ENCODE measurements at regions of chr5 and their contacts with region 1.

Region 1: GRCh38 chr5:177081859-177082258 is 4.9 kb upstream of the FGFR4 start:
- DNase-seq: no peak
- ATAC-seq: no peak
- H3K4me3 Mint-ChIP-seq: no peak overlapping the region
- H3K27ac Mint-ChIP-seq: no peak overlapping the region
- H3K4me1 Mint-ChIP-seq: peaks cover 14% of the 10 kb centered on the region
- H3K27me3 Mint-ChIP-seq: peaks cover 3% of the 10 kb centered on the region
- CTCF ChIP-seq: no peak

Region 2: DNA sequence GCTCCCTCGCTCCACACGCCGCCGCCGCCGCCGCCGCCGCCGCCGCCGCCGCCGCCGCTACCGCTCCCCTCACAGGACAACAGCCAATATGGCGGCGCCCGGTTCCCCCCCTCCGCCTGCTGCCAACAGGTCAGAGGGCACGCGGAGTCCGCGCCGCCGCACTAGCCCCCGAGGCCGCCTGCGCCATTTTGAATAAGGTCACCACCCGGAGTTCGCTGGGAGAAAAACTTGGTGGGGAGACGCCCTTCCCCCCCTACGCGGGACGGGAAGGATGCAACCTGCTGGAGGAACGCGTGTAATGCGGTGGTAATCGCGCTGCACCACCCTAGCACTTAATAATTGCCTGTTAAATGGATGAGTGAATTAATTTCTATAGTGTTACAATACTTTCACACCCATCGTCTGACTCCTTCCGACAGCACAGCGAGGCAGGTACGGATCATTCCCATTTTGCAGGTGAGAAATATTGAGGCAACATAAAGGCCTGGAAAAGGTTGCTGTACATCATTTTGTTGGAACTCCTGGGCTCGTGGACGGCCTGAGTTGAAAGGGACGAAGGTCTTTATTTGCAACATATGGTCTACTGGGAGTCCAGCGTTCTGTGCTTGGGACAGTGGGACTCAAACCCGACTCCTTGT is 472.7 kb after region 1 on chr5 and contains the start of gene FAM193B:
- CTCF ChIA-PET with region 1: no interaction called
- POLR2A ChIA-PET with region 1: no interaction called
- intact Hi-C with region 1: no loop called
- DNase-seq: peak; percentile 93
- ATAC-seq: peak; percentile 99
- H3K4me3 Mint-ChIP-seq: peak within 1 kb of the TSS; percentile 88
- H3K27ac Mint-ChIP-seq: peak within 1 kb of the TSS; percentile 77
- H3K4me1 Mint-ChIP-seq: peaks cover 29% of the 10 kb centered on the region
- H3K27me3 Mint-ChIP-seq: no peaks in the 10 kb centered on the region
- CTCF ChIP-seq: no peak
- total RNA-seq, gene FAM193B: 108 and 121 TPM in 2 replicates

Region 3: GRCh38 chr5:177967221-177967887 is 885.5 kb after region 1 on chr5:
- CTCF ChIA-PET with region 1: no interaction called
- POLR2A ChIA-PET with region 1: interaction called, 15 read pairs
- intact Hi-C with region 1: no loop called
- DNase-seq: no peak
- ATAC-seq: no peak
- H3K4me3 Mint-ChIP-seq: no peak overlapping the region
- H3K27ac Mint-ChIP-seq: no peak overlapping the region
- H3K4me1 Mint-ChIP-seq: no peaks in the 10 kb centered on the region
- H3K27me3 Mint-ChIP-seq: peaks cover 2% of the 10 kb centered on the region
- CTCF ChIP-seq: no peak